Activated CD4-positive, alpha-beta memory T cell treated with anti-CD3 and anti-CD28 coated beads for 36 hours (primary cell): ENCODE measurements at regions of chr6 and their contacts with region 1.

Region 1: GRCh38 chr6:26156076-26156849 is 69.0 kb downstream of the HFE start:
- DNase-seq: peak; percentile 91
- H3K4me3 Mint-ChIP-seq: peak overlapping the region; percentile 81
- H3K27ac Mint-ChIP-seq: peak overlapping the region; percentile 93
- H3K4me1 Mint-ChIP-seq: peaks cover 46% of the 10 kb centered on the region
- H3K27me3 Mint-ChIP-seq: peaks cover 24% of the 10 kb centered on the region

Region 2: GRCh38 chr6:26025894-26026832 is 130.1 kb before region 1 on chr6:
- CTCF ChIA-PET with region 1: no interaction called
- POLR2A ChIA-PET with region 1: interaction called, 65 read pairs
- intact Hi-C with region 1: no loop called
- DNase-seq: peak; percentile 96
- H3K4me3 Mint-ChIP-seq: peak overlapping the region; percentile 87
- H3K27ac Mint-ChIP-seq: peak overlapping the region; percentile 91
- H3K4me1 Mint-ChIP-seq: peaks cover 53% of the 10 kb centered on the region
- H3K27me3 Mint-ChIP-seq: peaks cover 5% of the 10 kb centered on the region

Region 3: DNA sequence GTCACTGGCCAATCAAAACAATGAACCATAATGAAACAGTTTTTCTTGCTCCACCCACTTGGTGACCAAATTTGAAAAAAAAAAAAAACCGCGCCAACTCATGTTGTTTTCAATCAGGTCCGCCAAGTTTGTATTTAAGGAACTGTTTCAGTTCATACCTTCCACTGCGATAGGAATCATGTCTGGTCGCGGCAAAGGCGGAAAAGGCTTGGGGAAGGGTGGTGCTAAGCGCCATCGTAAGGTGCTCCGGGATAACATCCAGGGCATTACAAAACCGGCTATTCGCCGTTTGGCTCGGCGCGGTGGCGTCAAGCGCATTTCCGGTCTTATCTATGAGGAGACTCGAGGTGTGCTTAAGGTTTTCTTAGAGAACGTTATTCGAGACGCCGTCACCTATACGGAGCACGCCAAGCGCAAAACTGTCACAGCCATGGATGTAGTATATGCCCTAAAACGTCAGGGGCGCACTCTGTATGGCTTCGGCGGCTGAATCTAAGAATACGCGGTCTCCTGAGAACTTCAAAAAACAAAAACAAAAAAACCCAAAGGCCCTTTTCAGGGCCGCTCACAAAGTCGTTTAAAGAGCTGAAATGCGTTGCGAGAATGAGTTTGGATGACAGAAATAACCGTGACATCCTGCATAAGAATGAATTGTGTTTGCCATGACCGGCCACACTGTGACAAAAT is 52.4 kb before region 1 on chr6:
- CTCF ChIA-PET with region 1: interaction called, 3 read pairs
- POLR2A ChIA-PET with region 1: interaction called, 54 read pairs
- intact Hi-C with region 1: loop called (anchors 1 kb)
- DNase-seq: peak; percentile 93
- H3K4me3 Mint-ChIP-seq: peak overlapping the region; percentile 80
- H3K27ac Mint-ChIP-seq: peak overlapping the region; percentile 93
- H3K4me1 Mint-ChIP-seq: peaks cover 18% of the 10 kb centered on the region
- H3K27me3 Mint-ChIP-seq: peaks cover 3% of the 10 kb centered on the region

Region 4: GRCh38 chr6:26175428-26176181 is 19.3 kb after region 1 on chr6:
- CTCF ChIA-PET with region 1: interaction called, 6 read pairs
- POLR2A ChIA-PET with region 1: interaction called, 202 read pairs
- intact Hi-C with region 1: loop called (anchors 1 kb)
- DNase-seq: peak; percentile 63
- H3K4me3 Mint-ChIP-seq: peak overlapping the region; percentile 24
- H3K27ac Mint-ChIP-seq: peak overlapping the region; percentile 43
- H3K4me1 Mint-ChIP-seq: peaks cover 31% of the 10 kb centered on the region
- H3K27me3 Mint-ChIP-seq: no peaks in the 10 kb centered on the region

Region 5: GRCh38 chr6:26216356-26216885 is 60.2 kb after region 1 on chr6:
- CTCF ChIA-PET with region 1: no interaction called
- POLR2A ChIA-PET with region 1: interaction called, 114 read pairs
- intact Hi-C with region 1: loop called (anchors 1 kb)
- DNase-seq: peak; percentile 89
- H3K4me3 Mint-ChIP-seq: no peak overlapping the region
- H3K27ac Mint-ChIP-seq: no peak overlapping the region
- H3K4me1 Mint-ChIP-seq: peaks cover 5% of the 10 kb centered on the region
- H3K27me3 Mint-ChIP-seq: no peaks in the 10 kb centered on the region

Region 6: DNA sequence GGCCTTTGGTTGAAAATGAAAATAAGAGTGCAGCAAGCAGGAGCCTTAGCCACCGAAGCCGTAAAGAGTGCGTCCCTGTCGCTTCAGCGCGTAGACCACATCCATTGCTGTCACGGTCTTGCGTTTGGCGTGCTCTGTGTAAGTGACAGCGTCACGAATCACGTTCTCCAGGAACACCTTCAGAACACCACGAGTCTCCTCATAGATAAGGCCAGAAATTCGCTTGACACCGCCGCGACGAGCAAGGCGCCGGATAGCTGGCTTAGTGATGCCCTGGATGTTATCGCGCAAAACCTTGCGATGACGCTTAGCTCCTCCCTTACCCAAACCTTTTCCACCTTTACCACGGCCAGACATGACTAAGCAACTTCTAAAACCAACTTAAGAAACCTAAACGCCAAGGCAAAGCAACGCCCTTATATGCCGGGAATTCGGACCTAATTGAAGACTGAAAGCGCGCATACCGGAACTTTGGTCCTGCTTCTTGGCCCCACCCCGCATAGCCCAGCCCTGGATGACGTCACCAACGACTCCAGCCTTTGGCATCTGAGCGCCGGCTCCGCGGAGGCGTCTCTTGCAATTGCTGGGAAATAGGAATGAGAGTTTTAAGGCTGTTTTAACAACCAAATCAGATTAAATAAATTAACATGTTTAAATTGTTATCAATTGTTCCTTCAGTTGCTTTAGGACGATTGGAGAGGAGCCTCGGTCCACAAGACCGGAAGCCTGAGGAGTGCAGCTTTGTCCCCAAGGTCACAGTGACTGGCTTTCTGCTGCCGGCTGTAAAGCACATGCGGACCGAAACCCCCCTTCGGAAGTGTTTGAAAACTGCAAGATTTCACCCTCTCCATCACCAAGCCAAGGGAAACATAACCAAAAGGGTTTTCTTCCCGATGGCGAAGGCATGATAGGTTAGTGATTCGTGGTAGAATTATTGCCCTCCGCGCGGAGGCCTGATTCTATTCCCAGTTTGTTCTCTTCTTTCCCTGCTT is 129.2 kb after region 1 on chr6:
- CTCF ChIA-PET with region 1: no interaction called
- POLR2A ChIA-PET with region 1: interaction called, 11 read pairs
- intact Hi-C with region 1: loop called (anchors 1 kb)
- DNase-seq: peak; percentile 98
- H3K4me3 Mint-ChIP-seq: peak overlapping the region; percentile 92
- H3K27ac Mint-ChIP-seq: peak overlapping the region; percentile 96
- H3K4me1 Mint-ChIP-seq: peaks cover 16% of the 10 kb centered on the region
- H3K27me3 Mint-ChIP-seq: peaks cover 5% of the 10 kb centered on the region

Region 7: DNA sequence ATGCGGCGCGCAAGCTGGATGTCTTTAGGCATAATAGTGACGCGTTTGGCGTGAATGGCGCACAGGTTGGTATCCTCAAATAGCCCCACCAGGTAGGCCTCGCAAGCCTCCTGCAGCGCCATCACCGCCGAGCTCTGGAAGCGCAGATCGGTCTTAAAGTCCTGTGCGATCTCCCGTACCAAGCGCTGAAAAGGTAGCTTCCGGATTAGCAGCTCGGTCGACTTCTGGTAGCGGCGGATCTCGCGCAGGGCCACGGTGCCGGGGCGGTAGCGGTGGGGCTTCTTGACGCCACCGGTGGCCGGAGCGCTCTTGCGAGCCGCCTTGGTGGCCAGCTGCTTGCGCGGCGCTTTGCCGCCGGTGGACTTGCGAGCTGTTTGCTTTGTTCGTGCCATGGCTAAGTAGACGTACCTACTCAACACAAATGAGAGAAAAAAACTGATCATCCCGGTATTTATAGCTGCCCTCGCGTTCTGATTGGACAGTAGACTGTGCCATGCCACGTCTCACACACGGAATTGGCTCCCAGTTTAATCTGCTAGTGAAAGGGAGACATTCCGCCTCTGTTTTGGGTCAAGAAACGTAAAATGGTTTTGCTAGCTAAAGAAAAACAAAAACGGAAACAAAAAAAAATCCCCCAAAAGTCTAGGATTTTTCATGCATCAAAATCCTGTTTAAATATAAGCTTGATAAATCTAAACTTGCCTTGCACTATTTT is 1715.8 kb after region 1 on chr6:
- CTCF ChIA-PET with region 1: no interaction called
- POLR2A ChIA-PET with region 1: interaction called, 6 read pairs
- intact Hi-C with region 1: loop called (anchors 5 kb)
- DNase-seq: peak; percentile 82
- H3K4me3 Mint-ChIP-seq: peak overlapping the region; percentile 81
- H3K27ac Mint-ChIP-seq: peak overlapping the region; percentile 99
- H3K4me1 Mint-ChIP-seq: peaks cover 30% of the 10 kb centered on the region
- H3K27me3 Mint-ChIP-seq: peaks cover 8% of the 10 kb centered on the region